Ascending aorta (tissue), 2 donors: ENCODE measurements at regions of chr17 and their contacts with region 1.

Region 1: DNA sequence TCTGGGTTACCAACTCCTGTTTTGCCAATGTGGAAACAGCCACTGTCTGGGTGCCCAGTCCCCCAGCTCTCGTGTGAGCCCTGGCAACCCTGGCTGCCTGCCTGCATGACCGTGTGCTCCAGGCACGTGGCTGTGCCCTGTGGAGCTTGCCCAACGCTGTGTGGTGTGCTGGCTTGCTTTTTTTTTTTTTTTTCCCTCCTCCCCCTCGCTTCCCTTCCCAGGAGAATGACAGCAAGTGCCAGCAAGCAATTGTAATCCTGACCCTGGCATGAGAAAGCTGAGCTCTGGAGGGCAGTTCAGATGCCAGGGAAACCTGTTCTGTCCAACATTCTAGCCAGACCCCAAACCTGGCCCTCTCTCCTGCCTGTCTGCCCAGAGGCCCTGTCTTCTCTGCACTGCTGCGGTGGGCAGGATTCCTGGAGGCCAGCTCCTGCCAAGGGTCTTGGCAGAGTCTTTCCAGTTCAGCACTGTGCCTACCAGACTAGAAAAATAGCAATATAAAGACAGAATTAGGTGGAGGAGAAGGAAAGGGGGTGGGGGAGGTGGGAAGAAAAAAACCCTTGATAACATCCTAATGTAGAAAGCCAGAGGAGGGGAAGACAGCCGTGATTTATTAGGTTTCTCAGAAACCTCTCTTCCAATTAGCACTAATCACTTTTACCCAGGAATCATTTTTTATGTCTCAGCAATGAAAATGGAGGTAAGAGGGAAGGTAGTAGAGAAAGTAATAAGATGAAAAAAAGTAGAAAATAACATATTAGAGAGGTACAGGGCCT is 9.0 kb downstream of the HLF start:
- DNase-seq: peak; percentile 62 to 93
- H3K4me3 ChIP-seq: peak overlapping the region in 1 of 2 donors; percentile 35
- H3K27ac ChIP-seq: peak overlapping the region; percentile 83 to 91
- H3K4me1 ChIP-seq: peaks cover 11 to 46% of the 10 kb centered on the region in 2 donors
- H3K27me3 ChIP-seq: no peaks in the 10 kb centered on the region
- CTCF ChIP-seq: no peak

Region 2: DNA sequence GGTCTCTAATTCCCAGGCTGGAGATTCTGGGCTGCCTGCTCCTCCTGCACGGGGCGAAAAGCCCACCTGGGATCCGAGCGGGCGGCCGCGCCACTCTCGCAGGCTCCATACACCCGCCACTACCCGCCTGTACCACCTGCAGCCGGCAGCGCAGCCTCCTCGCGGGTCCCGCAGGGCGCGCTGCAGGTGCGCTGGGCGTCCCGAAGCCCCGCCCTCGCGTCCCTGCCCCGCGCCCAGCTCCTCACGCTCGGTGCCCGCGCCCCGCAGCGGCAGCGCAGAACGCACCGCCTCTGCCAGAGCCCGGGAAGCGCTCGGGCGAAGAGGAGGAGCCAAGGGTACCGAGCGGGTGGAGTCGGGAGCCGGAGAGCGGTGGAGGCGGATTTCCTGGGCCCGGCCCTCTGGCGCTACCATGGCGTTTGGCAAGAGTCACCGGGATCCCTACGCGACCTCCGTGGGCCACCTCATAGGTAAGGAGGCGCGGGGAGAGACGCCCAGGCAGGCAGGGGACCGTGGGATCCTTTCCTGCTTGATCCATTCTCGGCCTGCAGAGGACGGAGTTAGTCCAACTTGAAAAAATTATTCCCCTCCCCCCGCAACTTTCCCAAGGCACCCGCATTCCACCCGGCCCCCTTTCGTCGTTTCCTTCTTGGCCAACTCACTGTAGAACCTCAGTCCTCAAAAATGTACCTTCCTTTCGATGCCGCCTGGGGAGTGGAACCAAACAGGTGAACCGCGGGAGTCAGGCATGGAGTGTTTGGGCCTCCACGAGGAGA is 373.1 kb before region 1 on chr17 and contains the start of gene TOM1L1:
- intact Hi-C with region 1: loop called (anchors 10 kb)
- DNase-seq: peak; percentile 14 to 81
- H3K4me3 ChIP-seq: peak within 1 kb of the TSS; percentile 68 to 69
- H3K27ac ChIP-seq: peak within 1 kb of the TSS in 1 of 2 donors; percentile 41
- H3K4me1 ChIP-seq: no peaks in the 10 kb centered on the region
- H3K27me3 ChIP-seq: no peaks in the 10 kb centered on the region
- CTCF ChIP-seq: peak in 1 of 3 experiments; percentile 6
- total RNA-seq, gene TOM1L1: 31.0 TPM

Region 3: DNA sequence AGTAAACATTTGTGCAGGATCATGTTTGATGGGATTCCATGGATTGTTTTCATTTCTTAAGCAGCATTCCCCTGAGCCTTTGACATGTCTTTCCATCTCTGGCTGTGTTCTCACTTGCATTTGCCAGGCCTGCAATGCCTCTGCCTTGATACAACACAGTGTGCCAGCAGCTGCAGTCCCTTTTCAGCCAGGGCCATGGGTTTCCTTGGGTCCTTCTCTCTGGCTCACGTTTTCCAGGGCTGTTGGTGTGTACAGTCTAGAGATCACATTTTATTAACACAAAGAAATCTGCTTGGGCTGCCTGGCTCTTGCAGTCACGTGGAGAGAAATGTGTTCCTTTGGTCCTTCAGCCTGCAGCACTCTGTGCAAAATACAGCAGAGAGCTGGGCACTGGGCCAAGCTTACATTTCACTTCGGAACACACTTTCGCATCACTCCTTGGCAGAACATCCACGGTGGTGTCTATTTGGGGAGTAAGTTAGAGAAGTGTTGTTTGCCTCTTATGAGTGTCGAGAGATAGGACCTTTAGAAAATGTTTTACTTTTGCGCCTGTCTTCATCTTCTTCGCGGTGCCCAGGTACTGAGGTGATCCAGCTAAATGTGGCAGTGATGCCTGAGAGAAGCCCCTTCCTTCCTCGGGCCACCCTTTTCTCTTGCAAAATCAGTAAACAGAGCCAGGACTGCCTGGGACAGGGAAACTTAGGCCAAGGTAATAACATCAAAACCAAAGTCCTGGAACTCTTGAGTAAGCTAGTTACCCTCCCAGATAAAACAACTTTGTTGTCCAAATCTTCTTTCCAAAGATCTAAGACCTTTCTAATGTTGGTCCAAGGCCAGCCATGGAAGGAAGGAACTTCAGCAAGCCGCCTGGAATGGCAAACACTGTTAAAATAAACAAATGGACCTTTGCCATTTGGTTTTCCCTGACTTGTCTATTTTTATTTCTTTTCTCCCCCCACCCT is 11.9 kb after region 1 on chr17:
- intact Hi-C with region 1: loop called (anchors 1 kb)
- DNase-seq: peak; percentile 66 to 96
- H3K4me3 ChIP-seq: peak overlapping the region; percentile 23 to 43
- H3K27ac ChIP-seq: peak overlapping the region; percentile 83 to 88
- H3K4me1 ChIP-seq: peaks cover 31 to 60% of the 10 kb centered on the region in 2 donors
- H3K27me3 ChIP-seq: no peaks in the 10 kb centered on the region
- CTCF ChIP-seq: no peak